Activated CD4-positive, alpha-beta T cell treated with anti-CD3 and anti-CD28 coated beads, Interleukin-2, amount 10 ng/mL, durations not matched to agents 24 days and 14 days (primary cell): ENCODE measurements at regions of chr5 and their contacts with region 1.

Region 1: DNA sequence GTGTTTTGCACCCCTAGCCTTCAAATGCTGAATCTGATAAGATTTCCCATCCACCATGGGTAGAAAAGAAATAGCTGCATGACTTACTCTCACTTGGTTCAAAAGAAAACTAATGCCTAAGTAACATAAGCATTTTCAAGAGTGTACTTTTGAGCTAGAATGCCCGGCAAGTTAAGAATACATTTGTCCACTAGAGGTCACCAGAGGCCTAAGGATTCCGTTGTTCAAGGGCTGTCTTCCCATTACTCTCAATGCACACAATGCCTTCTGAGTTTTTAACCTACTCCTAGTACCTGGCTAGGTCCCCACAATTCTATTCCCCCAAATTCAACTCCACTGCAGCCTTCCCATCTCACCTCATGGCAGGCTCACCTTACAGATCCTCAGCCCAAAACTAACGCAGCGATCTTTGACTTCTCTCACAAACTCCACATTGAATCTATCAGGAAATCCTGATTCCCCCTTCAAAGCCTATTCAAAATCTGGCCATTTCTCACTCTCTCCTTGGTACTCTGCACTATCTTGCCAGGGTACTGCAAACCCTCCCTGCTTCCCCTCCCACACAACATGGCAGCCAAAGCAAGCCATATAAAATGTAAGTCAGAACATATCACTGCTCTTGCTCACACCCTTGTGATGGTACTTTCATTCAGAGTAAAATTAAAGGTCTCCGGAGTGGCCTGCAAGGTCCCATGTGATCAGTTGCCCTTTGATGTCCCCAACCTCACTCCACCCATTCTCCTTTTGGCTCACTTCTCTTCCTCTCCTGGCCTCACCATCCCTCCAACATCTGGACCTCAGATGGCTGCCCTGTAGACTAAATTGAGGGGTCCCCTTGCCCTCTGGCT is 13.4 kb downstream of the OXCT1 start:
- DNase-seq: peak; percentile 91
- H3K4me3 Mint-ChIP-seq: no peak overlapping the region
- H3K27ac Mint-ChIP-seq: peak overlapping the region; percentile 6
- H3K4me1 Mint-ChIP-seq: peaks cover 12% of the 10 kb centered on the region
- H3K27me3 Mint-ChIP-seq: no peaks in the 10 kb centered on the region

Region 2: GRCh38 chr5:41246376-41246775 is 610.5 kb before region 1 on chr5:
- intact Hi-C with region 1: no loop called
- DNase-seq: no peak
- H3K4me3 Mint-ChIP-seq: no peak overlapping the region
- H3K27ac Mint-ChIP-seq: no peak overlapping the region
- H3K4me1 Mint-ChIP-seq: no peaks in the 10 kb centered on the region
- H3K27me3 Mint-ChIP-seq: no peaks in the 10 kb centered on the region

Region 3: DNA sequence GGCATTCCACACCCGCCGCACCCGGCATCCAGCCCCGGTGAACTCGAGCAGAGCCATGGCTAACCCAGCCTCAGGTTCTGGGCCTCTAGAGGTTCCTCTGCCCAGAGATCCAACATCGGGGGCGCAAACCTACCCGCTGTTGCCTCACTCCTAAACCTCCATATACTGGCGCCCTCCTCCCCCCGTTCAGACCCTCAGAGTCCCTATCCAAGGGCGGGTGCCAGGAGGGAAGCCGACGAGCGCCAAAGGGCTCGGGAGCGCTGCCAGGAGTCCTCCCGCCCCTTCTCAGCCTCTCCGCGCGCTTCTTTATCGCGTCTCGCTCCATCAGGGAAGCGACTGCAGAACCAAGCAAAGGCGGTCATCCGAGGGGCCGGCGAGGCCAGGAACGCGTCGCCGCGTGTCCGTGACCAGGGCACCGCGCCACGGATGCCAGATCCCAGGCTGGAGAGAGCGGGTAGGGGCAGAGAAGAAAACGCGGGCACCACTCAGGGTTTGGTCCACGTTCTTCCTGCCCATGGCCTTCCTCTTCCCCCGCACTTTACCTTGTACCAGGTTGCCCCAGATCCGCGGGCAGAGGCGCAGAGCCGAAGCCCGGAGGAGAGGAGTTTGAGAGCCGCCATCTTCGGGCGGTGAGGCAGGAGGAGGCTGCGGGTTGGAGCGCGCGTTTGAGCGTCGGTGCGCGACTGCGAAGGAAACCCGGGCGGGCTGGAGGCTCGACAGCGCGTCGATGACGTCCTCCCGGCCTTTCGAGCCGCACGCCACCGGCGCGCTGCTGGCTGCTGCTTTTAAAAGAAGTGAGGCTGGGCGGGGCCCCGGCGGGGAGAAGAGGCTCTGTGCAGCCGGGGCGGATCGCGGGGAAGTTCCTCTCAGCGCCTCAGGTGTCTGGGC is 13.1 kb after region 1 on chr5 and contains the start of gene OXCT1:
- intact Hi-C with region 1: loop called (anchors 1 kb)
- DNase-seq: peak; percentile 98
- H3K4me3 Mint-ChIP-seq: peak within 1 kb of the TSS; percentile 92
- H3K27ac Mint-ChIP-seq: peak within 1 kb of the TSS; percentile 85
- H3K4me1 Mint-ChIP-seq: peaks cover 48% of the 10 kb centered on the region
- H3K27me3 Mint-ChIP-seq: no peaks in the 10 kb centered on the region
- total RNA-seq, gene OXCT1: 92.6 and 93.4 TPM in 2 replicates

Region 4: DNA sequence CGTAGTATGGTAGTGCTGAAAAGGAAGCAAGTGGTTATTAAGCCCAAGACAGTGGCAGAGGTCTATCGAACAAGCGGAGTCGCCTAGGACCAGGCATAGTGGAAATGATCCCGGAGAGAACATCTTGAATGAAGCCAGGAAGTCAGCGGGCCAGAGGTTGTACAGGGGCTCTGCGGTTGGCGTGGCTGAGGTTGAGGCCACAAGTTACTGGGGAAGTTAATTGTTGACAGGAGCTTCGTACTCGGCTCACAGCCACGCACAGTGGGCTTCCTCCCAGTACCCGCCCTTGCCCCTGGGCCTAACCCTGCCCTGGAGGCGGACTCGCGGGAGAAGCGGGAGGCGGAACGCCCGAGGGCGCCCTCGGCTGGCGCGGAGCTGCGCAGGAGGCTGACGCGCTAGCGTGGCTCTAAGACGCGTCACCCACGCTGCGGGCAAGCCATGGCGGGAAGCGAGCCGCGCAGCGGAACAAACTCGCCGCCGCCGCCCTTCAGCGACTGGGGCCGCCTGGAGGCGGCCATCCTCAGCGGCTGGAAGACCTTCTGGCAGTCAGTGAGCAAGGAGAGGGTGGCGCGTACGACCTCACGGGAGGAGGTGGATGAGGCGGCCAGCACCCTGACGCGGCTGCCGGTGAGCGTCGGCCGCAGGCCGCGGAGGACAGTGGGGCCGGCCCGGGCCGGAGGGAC is 68.1 kb after region 1 on chr5 and contains the start of gene FBXO4:
- intact Hi-C with region 1: loop called (anchors 1 kb)
- DNase-seq: peak; percentile 97
- H3K4me3 Mint-ChIP-seq: peak within 1 kb of the TSS; percentile 92
- H3K27ac Mint-ChIP-seq: peak within 1 kb of the TSS; percentile 98
- H3K4me1 Mint-ChIP-seq: peaks cover 17% of the 10 kb centered on the region
- H3K27me3 Mint-ChIP-seq: no peaks in the 10 kb centered on the region
- total RNA-seq, gene FBXO4: 16.8 and 19.9 TPM in 2 replicates

Region 5: GRCh38 chr5:42057254-42057690 is 200.4 kb after region 1 on chr5:
- intact Hi-C with region 1: loop called (anchors 1 kb)
- DNase-seq: peak; percentile 84
- H3K4me3 Mint-ChIP-seq: no peak overlapping the region
- H3K27ac Mint-ChIP-seq: no peak overlapping the region
- H3K4me1 Mint-ChIP-seq: no peaks in the 10 kb centered on the region
- H3K27me3 Mint-ChIP-seq: peaks cover 8% of the 10 kb centered on the region

Region 6: GRCh38 chr5:42767491-42768105 is 910.7 kb after region 1 on chr5:
- intact Hi-C with region 1: loop called (anchors 10 kb)
- DNase-seq: no peak
- H3K4me3 Mint-ChIP-seq: no peak overlapping the region
- H3K27ac Mint-ChIP-seq: no peak overlapping the region
- H3K4me1 Mint-ChIP-seq: no peaks in the 10 kb centered on the region
- H3K27me3 Mint-ChIP-seq: peaks cover 10% of the 10 kb centered on the region